CD8-positive, alpha-beta T cell (primary cell): ENCODE measurements at regions of chr17 and their contacts with region 1.

Region 1: DNA sequence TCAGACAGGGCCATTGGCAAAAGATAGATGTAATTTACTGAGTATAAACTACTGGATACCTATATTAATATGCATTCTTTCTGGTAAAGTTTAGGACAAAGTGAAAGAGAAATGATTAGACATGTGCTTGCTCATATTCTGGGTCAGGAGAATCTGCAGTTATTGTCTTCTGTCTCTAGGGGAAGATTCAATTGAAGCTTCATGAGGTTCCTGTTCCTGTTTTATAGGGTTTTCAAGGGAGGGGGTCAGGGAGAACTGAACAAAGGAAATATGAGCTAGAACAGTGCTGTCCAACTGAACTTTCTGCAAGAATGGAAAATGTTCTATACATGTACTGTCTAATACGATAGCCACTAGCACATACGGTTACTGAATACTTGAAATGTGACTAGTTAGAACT is 59.3 kb upstream of the CORO6 start:
- DNase-seq: peak in 2 of 9 experiments; percentile 12 to 47
- ATAC-seq: peak; percentile 49
- H3K4me3 ChIP-seq: no peak overlapping the region
- H3K4me3 Mint-ChIP-seq: no peak overlapping the region
- H3K27ac ChIP-seq: peak overlapping the region in 1 of 2 experiments; percentile 9
- H3K27ac Mint-ChIP-seq: peak overlapping the region; percentile 39
- H3K4me1 ChIP-seq: peaks cover 4% of the 10 kb centered on the region
- H3K4me1 Mint-ChIP-seq: peaks cover 27% of the 10 kb centered on the region
- H3K27me3 ChIP-seq: no peaks in the 10 kb centered on the region
- H3K27me3 Mint-ChIP-seq: no peaks in the 10 kb centered on the region
- CTCF ChIP-seq: no peak

Region 2: DNA sequence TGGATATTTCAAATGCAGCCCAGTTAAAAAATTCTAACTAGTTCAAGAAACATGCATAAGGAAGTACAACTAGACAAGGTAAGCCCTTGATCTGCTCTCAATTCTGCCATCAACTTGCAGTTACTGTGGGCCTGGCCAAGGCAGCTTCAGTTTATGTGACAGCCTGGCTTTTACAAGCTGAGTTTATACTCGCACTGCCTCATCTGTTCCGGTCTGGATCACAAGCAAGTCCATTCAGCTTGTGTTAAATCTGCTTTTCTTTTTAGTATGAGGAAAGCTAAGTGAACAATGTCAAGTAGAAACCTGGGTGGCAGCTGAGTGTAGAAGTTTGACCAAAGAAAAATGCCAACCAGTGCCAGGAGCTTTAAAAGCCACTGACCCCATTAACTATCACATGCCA is 17.2 kb after region 1 on chr17:
- CTCF ChIA-PET with region 1: interaction called, 4 read pairs
- POLR2A ChIA-PET with region 1: interaction called, 5 read pairs
- intact Hi-C with region 1: loop called in 1 of 2 experiments (anchors 2 kb)
- DNase-seq: no peak
- ATAC-seq: no peak
- H3K4me3 ChIP-seq: no peak overlapping the region
- H3K4me3 Mint-ChIP-seq: no peak overlapping the region
- H3K27ac ChIP-seq: peak overlapping the region in 1 of 2 experiments; percentile 7
- H3K27ac Mint-ChIP-seq: peak overlapping the region; percentile 84
- H3K4me1 ChIP-seq: peaks cover 7% of the 10 kb centered on the region
- H3K4me1 Mint-ChIP-seq: peaks cover 31% of the 10 kb centered on the region
- H3K27me3 ChIP-seq: no peaks in the 10 kb centered on the region
- H3K27me3 Mint-ChIP-seq: no peaks in the 10 kb centered on the region
- CTCF ChIP-seq: no peak